Heart left ventricle (tissue), 16 donors: ENCODE measurements at regions of chr2 and their contacts with region 1.

Region 1: DNA sequence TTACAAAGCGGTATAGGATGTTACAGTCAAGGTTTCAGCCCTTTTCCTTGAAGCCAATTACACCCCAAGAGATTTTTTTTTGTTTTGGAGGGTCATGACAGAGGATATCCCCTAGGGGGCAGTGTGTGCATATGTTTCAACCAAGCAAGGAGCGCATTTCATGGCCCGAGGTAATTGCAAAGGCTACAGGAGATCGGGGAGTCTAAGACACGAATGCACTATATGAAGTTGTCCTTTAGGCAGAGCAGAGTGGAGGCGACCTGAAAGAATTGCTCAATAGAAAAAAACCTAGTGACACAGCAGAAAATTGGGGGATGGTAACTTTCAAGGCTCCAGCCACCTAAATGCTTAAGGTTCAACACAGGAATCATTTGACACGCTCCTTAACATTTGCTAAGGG is 219.8 kb upstream of the PARD3B start:
- DNase-seq: peak in 4 of 5 donors; percentile 49 to 66 (median 56)
- ATAC-seq: peak; percentile 28 to 70 (median 46)
- H3K4me3 ChIP-seq: no peak overlapping the region
- H3K27ac ChIP-seq: no peak overlapping the region
- H3K4me1 ChIP-seq: peaks cover 0 to 18% (median 7%) of the 10 kb centered on the region in 12 donors
- H3K27me3 ChIP-seq: no peaks in the 10 kb centered on the region
- CTCF ChIP-seq: peak; percentile 76 to 93 (median 88)
- POLR2A ChIP-seq: no peak

Region 2: GRCh38 chr2:204691911-204692510 is 366.5 kb after region 1 on chr2:
- intact Hi-C with region 1: loop called (anchors 1 to 5 kb)
- DNase-seq: peak in 3 of 5 donors; percentile 26 to 45 (median 36)
- ATAC-seq: peak; percentile 71 to 91 (median 82)
- H3K4me3 ChIP-seq: no peak overlapping the region
- H3K27ac ChIP-seq: peak overlapping the region in 1 of 12 donors; percentile 20
- H3K4me1 ChIP-seq: peaks cover 0 to 20% (median 0%) of the 10 kb centered on the region in 12 donors
- H3K27me3 ChIP-seq: no peaks in the 10 kb centered on the region
- CTCF ChIP-seq: peak; percentile 55 to 81 (median 74)
- POLR2A ChIP-seq: no peak

Region 3: GRCh38 chr2:205766779-205767359 is 1441.4 kb after region 1 on chr2:
- intact Hi-C with region 1: loop called in 4 of 10 experiments (anchors 5 to 10 kb)
- DNase-seq: peak in 4 of 5 donors; percentile 35 to 60 (median 48)
- ATAC-seq: peak in 1 of 4 donors; percentile 49
- H3K4me3 ChIP-seq: no peak overlapping the region
- H3K27ac ChIP-seq: peak overlapping the region in 2 of 12 donors; percentile 58 to 85
- H3K4me1 ChIP-seq: peaks cover 0 to 32% (median 14%) of the 10 kb centered on the region in 12 donors
- H3K27me3 ChIP-seq: peaks cover 0 to 10% (median 2%) of the 10 kb centered on the region in 9 donors
- CTCF ChIP-seq: peak; percentile 78 to 90 (median 84)
- POLR2A ChIP-seq: no peak

Region 4: GRCh38 chr2:205925373-205926337 is 1600.2 kb after region 1 on chr2:
- intact Hi-C with region 1: loop called in 7 of 10 experiments (anchors 5 to 10 kb)
- DNase-seq: peak; percentile 68 to 91 (median 77)
- ATAC-seq: peak; percentile 76 to 94 (median 90)
- H3K4me3 ChIP-seq: peak overlapping the region in 8 of 12 donors; percentile 6 to 44 (median 20)
- H3K27ac ChIP-seq: peak overlapping the region in 1 of 12 donors; percentile 28
- H3K4me1 ChIP-seq: peaks cover 0 to 20% (median 5%) of the 10 kb centered on the region in 12 donors
- H3K27me3 ChIP-seq: peaks cover 0 to 31% (median 0%) of the 10 kb centered on the region in 9 donors
- CTCF ChIP-seq: peak; percentile 83 to 98 (median 92)
- POLR2A ChIP-seq: no peak

Region 5: DNA sequence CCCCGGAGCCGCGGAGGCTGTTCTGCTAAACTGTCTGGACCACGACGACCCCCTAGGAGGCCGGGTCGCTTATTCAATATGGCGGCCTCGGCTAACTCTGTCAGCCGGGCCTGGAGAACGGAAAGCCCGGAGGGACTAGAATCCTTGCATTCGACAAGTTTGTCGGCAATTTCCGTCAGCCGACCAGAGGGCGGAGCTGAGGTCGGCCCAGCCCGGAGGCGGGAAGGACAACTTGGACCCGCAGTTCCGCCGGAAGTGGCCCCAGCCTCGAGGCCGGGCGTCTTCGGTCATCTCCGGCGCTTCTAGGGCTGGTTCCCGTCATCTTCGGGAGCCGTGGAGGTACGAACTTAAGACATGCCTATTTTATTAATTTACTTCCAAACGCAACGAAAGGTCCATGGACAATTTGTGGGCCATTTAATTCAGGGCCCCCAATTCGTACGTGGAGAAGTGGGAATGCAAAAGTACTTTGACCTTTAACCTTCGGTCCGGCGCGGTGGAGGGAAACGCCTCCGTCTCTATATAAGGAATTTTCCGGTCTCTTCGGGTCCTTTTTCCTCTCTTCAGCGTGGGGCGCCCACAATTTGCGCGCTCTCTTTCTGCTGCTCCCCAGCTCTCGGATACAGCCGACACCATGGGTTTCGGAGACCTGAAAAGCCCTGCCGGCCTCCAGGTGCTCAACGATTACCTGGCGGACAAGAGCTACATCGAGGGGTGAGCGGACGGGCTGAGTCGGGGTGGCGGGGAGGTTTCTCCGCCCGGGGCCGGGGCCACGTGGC is 1834.1 kb after region 1 on chr2 and contains the starts of genes EEF1B2 and NDUFS1:
- intact Hi-C with region 1: loop called in 1 of 10 experiments (anchors 10 kb)
- DNase-seq: peak; percentile 98 to 99 (median 98)
- ATAC-seq: peak; percentile 96 to 97 (median 96)
- H3K4me3 ChIP-seq: peak within 1 kb of the TSS; percentile 54 to 96 (median 86)
- H3K27ac ChIP-seq: peak within 1 kb of the TSS; percentile 83 to 99 (median 96)
- H3K4me1 ChIP-seq: peaks cover 3 to 44% (median 34%) of the 10 kb centered on the region in 12 donors
- H3K27me3 ChIP-seq: no peaks in the 10 kb centered on the region
- CTCF ChIP-seq: no peak
- POLR2A ChIP-seq: peak in 1 of 2 donors; percentile 62
- total RNA-seq, gene EEF1B2: 123 to 326 (median 244) TPM
- total RNA-seq, gene NDUFS1: 302 to 804 (median 536) TPM